Kidney (tissue), 22 donors: ENCODE measurements at regions of chr17 and their contacts with region 1.

Region 1: DNA sequence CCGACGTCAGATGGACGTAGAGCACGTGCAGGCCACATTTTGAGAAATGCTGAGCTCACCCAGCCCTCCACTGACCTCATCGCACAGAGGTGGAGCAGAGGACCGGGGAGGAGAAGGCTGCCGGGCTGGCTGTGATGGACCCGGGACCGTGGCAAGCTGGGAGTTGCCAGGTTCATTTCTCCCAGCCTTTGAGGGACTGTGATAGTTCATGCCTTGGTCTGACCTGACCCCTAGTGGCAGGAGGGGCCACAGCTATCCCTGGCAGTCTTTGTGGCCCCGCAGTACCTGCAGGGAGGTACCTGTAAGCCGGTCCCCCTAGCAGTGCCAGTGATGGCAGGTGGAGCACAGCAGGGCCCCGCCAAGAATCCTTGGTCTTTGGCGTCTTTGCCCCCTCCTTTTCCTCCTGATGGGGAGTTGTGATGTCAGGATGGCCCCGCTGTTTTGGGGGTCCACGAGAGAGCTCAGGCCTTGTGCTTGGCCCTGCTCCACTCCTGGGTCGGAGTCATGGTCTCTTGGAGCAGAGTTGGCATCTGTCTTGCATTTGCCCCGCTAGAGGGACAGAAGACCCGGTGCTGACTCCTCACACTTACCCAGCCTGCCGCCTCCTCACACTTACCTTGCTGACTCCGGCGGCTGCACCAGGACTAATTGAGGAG is 50.4 kb downstream of the OR1D5 start:
- DNase-seq: peak; percentile 73 to 80 (median 74)
- H3K4me3 ChIP-seq: no peak overlapping the region
- H3K27ac ChIP-seq: no peak overlapping the region
- H3K4me1 ChIP-seq: no peaks in the 10 kb centered on the region
- H3K27me3 ChIP-seq: no peaks in the 10 kb centered on the region
- CTCF ChIP-seq: peak; percentile 87

Region 2: GRCh38 chr17:2828397-2829038 is 184.5 kb before region 1 on chr17:
- intact Hi-C with region 1: loop called (anchors 10 kb)
- DNase-seq: peak; percentile 60 to 87 (median 76)
- H3K4me3 ChIP-seq: no peak overlapping the region
- H3K27ac ChIP-seq: no peak overlapping the region
- H3K4me1 ChIP-seq: peaks cover 0 to 2% (median 0%) of the 10 kb centered on the region in 3 donors
- H3K27me3 ChIP-seq: no peaks in the 10 kb centered on the region
- CTCF ChIP-seq: peak; percentile 84

Region 3: DNA sequence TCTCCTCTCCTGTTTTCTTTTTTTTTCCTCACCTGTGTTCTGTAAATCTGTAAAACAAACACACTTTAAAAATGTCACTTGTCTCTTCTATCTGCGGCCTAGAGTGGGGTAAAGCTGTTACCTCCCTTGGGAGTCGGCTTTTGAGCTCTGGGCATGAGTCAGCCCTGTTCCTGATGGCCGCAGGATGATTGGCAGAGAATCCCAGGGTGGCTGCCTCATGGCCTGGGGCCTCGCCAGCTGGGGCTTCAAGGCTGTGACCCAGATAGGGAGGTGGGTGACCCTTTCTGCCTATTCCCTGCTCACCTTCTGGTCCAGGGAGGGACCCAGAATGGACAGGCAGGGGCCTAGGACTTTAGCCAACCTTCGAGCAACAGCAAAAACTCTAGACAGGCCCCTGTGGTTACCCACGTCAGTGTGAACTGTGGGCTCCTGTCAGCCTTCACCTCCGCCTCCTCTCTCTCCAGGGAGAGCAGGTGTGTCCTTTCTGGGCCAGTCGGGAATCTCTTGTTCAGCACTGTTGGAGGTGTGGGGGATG is 129.4 kb before region 1 on chr17:
- intact Hi-C with region 1: no loop called
- DNase-seq: no peak
- H3K4me3 ChIP-seq: no peak overlapping the region
- H3K27ac ChIP-seq: no peak overlapping the region
- H3K4me1 ChIP-seq: no peaks in the 10 kb centered on the region
- H3K27me3 ChIP-seq: no peaks in the 10 kb centered on the region
- CTCF ChIP-seq: no peak